Mammary epithelial cell (primary cell): ENCODE measurements at regions of chr11 and their contacts with region 1.

Region 1: GRCh38 chr11:60265373-60266214 is 14.9 kb upstream of the MS4A4A start:
- DNase-seq: peak; percentile 47
- H3K4me3 ChIP-seq: no peak overlapping the region
- H3K27ac ChIP-seq: no peak overlapping the region
- H3K4me1 ChIP-seq: no peaks in the 10 kb centered on the region
- H3K27me3 ChIP-seq: no peaks in the 10 kb centered on the region
- CTCF ChIP-seq: peak; percentile 57 to 68

Region 2: DNA sequence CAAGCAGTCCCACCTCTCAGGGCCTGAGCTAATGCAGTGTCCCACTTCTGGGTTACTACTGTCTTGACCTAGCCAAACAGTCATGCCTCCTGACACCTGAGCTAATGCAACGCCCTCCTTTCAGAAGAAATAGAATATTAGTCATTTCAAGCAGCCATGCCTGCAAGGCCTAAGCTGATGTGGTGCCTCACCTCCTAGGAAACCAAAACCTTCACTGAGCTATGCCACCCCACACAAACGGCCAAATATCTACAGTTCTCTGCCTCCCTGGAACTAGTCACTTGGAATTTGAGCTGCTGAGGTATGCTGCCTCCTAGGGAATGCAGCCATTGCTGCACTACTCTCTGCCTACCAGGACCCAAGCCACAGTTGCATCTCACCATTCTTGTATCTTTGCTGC is 53.1 kb after region 1 on chr11:
- CTCF ChIA-PET with region 1: no interaction called
- dilution Hi-C with region 1: no loop called
- in situ Hi-C with region 1: no loop called
- intact Hi-C with region 1: loop called (anchors 1 kb)
- DNase-seq: peak; percentile 52
- H3K4me3 ChIP-seq: no peak overlapping the region
- H3K27ac ChIP-seq: no peak overlapping the region
- H3K4me1 ChIP-seq: no peaks in the 10 kb centered on the region
- H3K27me3 ChIP-seq: peaks cover 4% of the 10 kb centered on the region
- CTCF ChIP-seq: peak in 1 of 2 donors; percentile 24

Region 3: GRCh38 chr11:60345489-60345888 is 79.9 kb after region 1 on chr11:
- CTCF ChIA-PET with region 1: no interaction called
- dilution Hi-C with region 1: no loop called
- in situ Hi-C with region 1: no loop called
- intact Hi-C with region 1: loop called (anchors 1 kb)
- DNase-seq: no peak
- H3K4me3 ChIP-seq: no peak overlapping the region
- H3K27ac ChIP-seq: no peak overlapping the region
- H3K4me1 ChIP-seq: no peaks in the 10 kb centered on the region
- H3K27me3 ChIP-seq: no peaks in the 10 kb centered on the region
- CTCF ChIP-seq: peak; percentile 38 to 50

Region 4: DNA sequence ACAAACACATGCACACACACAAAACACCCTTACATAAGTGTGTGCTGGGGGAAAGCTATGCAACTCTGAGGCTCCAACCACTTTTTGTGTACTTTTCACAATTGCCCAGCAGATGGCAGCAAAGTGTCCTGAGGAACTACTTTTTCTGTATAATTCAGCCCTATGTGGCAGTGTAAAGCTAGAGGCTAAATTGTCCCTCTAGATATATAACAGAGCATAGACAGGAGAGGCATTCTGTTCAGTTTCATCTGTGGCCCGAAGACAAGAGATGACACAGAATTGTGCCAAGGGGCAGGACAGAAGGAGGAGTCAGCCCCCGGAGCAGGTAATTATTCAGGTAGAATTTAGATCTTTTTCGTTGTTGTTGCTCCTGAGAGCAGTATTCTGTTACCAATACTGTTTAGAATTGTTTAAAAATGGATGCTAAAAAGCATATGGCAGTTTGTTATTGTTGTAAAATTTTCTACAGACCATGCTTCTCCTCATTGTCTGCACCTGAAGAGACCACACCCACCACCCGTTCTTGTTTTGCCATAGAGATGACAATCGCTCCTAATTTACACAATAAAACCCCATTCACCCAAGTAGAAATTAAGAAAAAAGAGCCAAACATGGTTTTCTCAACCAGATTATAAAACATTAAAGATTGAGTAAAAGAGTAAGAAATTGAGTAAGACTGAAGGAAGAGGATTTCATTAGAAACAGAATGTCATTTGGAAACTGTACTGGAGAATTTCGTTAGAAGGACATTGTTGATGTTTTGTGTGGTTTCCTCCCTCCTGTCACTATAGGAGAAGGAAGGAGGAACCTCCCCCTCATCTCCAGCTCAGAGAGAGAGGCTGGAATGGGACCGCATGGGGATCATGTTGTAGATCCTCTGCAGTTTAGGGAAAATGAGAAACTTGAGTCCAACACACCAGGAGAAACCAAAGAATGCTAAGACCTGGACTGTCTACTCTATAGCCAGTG is 98.2 kb after region 1 on chr11:
- CTCF ChIA-PET with region 1: no interaction called
- dilution Hi-C with region 1: no loop called
- in situ Hi-C with region 1: no loop called
- intact Hi-C with region 1: loop called (anchors 1 kb)
- DNase-seq: peak; percentile 39
- H3K4me3 ChIP-seq: no peak overlapping the region
- H3K27ac ChIP-seq: no peak overlapping the region
- H3K4me1 ChIP-seq: no peaks in the 10 kb centered on the region
- H3K27me3 ChIP-seq: peaks cover 5% of the 10 kb centered on the region
- CTCF ChIP-seq: peak; percentile 69 to 74

Region 5: GRCh38 chr11:60607483-60607882 is 341.9 kb after region 1 on chr11:
- CTCF ChIA-PET with region 1: no interaction called
- dilution Hi-C with region 1: no loop called
- in situ Hi-C with region 1: loop called (anchors 10 to 25 kb)
- intact Hi-C with region 1: no loop called
- DNase-seq: no peak
- H3K4me3 ChIP-seq: no peak overlapping the region
- H3K27ac ChIP-seq: no peak overlapping the region
- H3K4me1 ChIP-seq: no peaks in the 10 kb centered on the region
- H3K27me3 ChIP-seq: peaks cover 4% of the 10 kb centered on the region
- CTCF ChIP-seq: peak; percentile 3 to 9

Region 6: GRCh38 chr11:60615497-60615896 is 349.9 kb after region 1 on chr11:
- CTCF ChIA-PET with region 1: no interaction called
- dilution Hi-C with region 1: no loop called
- in situ Hi-C with region 1: loop called (anchors 10 to 25 kb)
- intact Hi-C with region 1: loop called (anchors 1 kb)
- DNase-seq: no peak
- H3K4me3 ChIP-seq: no peak overlapping the region
- H3K27ac ChIP-seq: no peak overlapping the region
- H3K4me1 ChIP-seq: no peaks in the 10 kb centered on the region
- H3K27me3 ChIP-seq: no peaks in the 10 kb centered on the region
- CTCF ChIP-seq: no peak

Region 7: DNA sequence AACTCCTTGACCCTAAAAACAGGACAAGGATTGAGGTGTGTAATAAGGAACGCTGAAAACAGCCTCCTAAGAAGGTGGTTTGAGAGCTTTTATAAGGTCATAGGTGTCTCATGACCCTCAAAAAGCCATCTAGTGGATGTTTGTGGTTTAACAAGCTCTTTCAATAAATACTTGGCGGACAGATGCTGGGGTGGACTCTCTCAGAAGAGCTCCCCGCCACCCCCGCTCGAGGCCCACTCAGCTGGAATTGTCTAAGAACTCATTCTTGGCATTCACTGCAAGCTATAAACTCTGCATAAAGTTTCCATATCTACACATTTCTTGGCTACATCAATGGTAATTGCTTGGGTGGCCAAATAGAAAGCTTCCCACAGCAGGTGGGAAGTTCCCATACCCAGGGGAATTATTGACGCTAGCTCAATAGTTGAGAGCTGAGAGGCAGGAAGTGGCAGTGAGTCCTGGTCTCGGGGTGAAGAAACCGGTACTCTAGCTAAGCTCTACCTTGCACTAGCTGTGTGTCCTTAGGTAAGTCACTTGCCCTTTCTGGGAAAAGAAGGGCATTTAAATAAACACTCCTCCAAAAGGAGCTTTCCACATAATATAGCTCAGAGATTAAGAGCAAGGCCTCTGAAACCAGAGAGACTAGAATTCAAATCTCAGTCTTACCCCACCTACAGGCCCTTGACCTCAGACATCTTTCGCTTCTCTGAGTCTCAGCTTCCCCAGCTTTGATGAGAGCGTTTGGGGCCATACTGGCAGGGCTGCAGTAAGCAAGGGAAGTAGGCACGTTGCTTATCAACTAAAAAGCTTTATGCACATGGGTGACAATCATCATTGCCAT is 497.5 kb after region 1 on chr11:
- CTCF ChIA-PET with region 1: no interaction called
- dilution Hi-C with region 1: no loop called
- in situ Hi-C with region 1: no loop called
- intact Hi-C with region 1: loop called (anchors 10 kb)
- DNase-seq: no peak
- H3K4me3 ChIP-seq: no peak overlapping the region
- H3K27ac ChIP-seq: no peak overlapping the region
- H3K4me1 ChIP-seq: no peaks in the 10 kb centered on the region
- H3K27me3 ChIP-seq: no peaks in the 10 kb centered on the region
- CTCF ChIP-seq: peak; percentile 27 to 53